ENCODE measurements at regions of chr20 and their contacts with region 1.

Region 1: DNA sequence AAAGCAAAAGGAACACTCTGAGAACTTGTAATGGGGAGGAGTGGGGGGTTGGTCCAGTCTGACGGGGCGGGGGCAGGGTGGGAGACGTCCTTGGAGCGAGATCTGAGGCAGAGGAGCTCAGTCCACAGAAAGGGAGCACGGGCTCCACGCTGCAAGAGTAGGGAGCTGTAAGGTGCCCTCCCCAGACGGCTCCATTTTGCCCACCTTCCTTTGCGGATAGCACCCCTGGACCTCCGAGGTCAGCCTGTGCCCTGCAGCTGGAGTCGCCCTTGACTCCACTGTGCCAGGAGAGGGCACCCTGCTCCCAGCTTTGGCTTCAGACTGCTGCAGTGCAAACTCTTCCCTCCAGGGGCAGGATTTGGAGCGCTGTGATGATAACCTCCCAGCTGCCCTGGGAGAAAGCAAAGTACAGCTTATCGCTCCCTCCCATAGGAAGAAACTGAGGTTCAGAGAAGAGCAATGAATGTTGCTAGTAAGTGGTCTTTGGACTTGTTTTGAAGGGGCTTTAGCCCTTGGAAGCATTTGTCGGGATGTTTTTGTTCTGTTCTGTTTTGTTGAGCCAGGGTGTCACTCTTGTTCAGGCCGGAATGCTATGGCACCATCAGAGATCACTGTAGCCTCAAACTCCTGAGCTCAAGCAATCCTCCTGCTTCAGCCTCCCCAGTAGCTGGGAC is 9.5 kb upstream of the AHCY start:
- DNase-seq: peak; percentile 82
- ATAC-seq: peak; percentile 98

Region 2: DNA sequence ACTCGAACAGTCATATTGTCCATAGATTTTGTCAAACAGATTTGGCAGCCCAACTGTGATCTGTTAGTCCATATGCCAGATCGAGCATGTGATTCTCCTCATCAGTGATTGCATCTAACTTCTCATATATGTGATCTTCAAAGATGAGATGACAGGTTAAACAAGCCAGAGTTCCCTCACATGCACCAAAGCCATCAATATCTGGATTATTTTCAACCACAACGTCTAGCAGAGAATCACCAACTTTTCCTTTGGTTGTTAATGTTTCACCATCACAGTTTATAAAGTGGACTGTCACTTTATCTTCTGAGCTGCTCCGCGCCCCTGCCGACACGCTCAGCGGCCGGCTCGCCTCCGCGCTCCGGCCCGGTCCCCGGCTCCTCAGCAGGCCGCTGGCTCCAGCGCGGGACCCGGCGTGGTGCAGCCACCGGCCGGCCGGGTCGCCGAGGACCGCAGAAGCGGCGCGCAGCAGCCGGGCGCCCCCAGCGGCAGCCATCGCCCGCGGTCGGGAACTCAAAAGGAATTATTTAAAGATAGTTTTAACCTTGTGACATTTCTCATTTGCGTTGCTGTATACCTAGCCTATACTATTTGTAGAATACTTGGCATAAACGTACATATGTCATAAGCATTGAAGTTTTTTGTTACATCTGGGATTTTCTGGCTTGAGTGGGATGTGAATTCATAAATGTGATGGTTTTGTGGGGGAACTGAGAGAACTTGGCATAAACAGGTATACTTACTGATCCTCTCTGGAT is 163.5 kb after region 1 on chr20:
- intact Hi-C with region 1: loop called (anchors 2 kb)
- DNase-seq: peak; percentile 75
- ATAC-seq: peak; percentile 93

Region 3: GRCh38 chr20:34522969-34523871 is 210.5 kb after region 1 on chr20:
- intact Hi-C with region 1: loop called (anchors 2 kb)
- DNase-seq: no peak
- ATAC-seq: peak; percentile 20

Region 4: GRCh38 chr20:34768096-34768495 is 455.4 kb after region 1 on chr20:
- intact Hi-C with region 1: loop called (anchors 2 kb)
- DNase-seq: no peak
- ATAC-seq: no peak

Measured in Right ventricle myocardium inferior (tissue), 1 donor.